Colonic mucosa (tissue), 4 donors: ENCODE measurements at regions of chr2 and their contacts with region 1.

Region 1: DNA sequence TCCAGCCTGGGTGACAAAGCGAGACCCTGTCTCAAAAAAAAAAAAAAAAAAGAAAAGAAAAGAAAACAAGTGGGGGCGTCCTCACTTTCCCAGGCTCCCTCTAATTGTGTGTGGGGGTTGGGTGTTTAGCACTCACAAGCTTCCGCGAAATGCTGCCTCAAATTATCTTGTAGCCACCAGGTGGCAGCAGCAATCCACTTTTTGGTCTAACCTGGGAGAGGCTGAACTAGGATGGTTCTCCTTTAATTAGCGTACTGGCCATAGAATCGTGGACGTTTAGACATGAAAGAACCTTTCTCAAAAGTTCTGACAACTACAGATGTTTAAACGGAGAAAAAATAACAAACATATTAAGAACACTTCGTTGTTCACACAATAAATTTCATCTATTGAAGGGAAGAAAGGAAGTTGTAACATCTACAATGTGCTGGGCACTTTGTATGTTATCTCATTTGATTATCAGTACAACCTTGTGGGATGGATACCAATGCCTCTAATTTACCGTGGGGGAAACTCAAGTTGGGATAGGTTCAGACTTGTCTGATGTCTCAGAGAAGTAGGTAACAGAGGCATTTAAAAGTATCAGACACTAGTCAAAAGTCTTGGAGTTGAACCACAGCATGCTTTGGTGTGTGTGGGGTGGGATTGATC is 122.7 kb upstream of the NABP1 start:
- DNase-seq: peak; percentile 93
- H3K4me3 ChIP-seq: no peak overlapping the region
- H3K27ac ChIP-seq: no peak overlapping the region
- H3K4me1 ChIP-seq: no peaks in the 10 kb centered on the region
- H3K27me3 ChIP-seq: no peaks in the 10 kb centered on the region
- CTCF ChIP-seq: peak; percentile 59

Region 2: GRCh38 chr2:191478799-191479679 is 76.2 kb before region 1 on chr2:
- intact Hi-C with region 1: no loop called
- DNase-seq: peak; percentile 50
- H3K4me3 ChIP-seq: no peak overlapping the region
- H3K27ac ChIP-seq: no peak overlapping the region
- H3K4me1 ChIP-seq: peaks cover 6% of the 10 kb centered on the region
- H3K27me3 ChIP-seq: no peaks in the 10 kb centered on the region
- CTCF ChIP-seq: no peak

Region 3: DNA sequence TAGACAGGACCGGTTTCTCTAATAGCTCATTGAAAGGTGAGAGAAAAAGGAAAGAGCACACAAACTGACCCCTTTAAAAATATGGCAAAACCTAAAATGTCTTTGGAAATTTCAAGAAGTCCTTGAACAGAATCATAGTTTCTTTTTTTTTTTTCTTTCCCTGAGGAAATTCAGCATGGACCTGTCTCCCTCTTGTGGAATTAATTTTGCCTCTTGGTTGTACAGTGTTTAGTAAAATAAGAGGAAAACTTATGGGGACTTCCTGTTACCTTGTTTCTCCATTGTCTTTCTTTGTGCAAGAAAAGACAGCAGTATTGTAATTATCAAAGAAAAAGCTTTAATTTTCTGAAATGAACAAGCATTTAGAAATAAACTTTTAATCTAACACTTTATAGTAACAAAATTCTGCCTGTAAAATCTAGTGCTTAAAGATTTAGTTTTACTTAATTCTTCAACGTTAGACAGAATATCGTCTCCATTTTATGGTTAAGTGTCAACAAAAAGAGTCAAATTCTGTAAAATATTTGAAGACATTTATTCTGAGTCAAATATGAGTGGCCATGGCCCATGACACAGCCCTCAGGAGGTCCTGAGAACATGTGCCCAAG is 53.6 kb before region 1 on chr2:
- intact Hi-C with region 1: no loop called
- DNase-seq: no peak
- H3K4me3 ChIP-seq: no peak overlapping the region
- H3K27ac ChIP-seq: no peak overlapping the region
- H3K4me1 ChIP-seq: no peaks in the 10 kb centered on the region
- H3K27me3 ChIP-seq: no peaks in the 10 kb centered on the region
- CTCF ChIP-seq: peak; percentile 57

Region 4: GRCh38 chr2:191811807-191812602 is 256.8 kb after region 1 on chr2:
- intact Hi-C with region 1: loop called (anchors 10 kb)
- DNase-seq: peak; percentile 60
- H3K4me3 ChIP-seq: no peak overlapping the region
- H3K27ac ChIP-seq: no peak overlapping the region
- H3K4me1 ChIP-seq: no peaks in the 10 kb centered on the region
- H3K27me3 ChIP-seq: no peaks in the 10 kb centered on the region
- CTCF ChIP-seq: peak; percentile 67